A549 (cell line): ENCODE measurements at regions of chr6 and their contacts with region 1.

Region 1: DNA sequence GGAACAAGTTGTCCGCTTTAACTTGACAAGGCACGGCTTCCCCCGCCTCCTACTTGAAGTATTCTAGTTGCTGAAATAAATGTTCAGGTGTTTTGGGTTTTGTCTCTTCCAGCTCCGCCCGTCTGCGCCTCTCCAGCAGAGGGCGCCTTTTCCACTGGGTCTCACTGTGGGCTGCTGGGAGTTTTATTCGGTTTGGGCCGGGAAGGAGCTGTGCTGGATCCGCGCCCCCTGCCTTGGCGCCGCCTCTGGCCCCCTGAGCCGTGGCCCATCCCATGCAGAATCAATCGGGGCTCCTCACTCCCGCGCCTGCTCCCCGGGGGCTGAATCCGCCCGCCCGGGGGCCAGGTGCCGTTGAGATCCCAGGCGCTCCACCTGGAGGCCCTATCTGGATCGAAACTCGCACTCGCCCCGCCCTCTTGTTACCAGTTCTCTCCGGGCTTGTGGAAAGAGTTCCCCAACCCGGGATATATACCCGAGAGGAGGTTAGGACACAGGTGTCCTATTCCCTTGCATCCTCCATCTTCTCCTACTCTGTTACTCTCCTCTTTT is 51.0 kb upstream of the TCF21 start:
- DNase-seq: peak; percentile 28 to 81
- ATAC-seq: peak; percentile 96 to 97
- H3K4me3 ChIP-seq: peak overlapping the region; percentile 56
- H3K27ac ChIP-seq: peak overlapping the region; percentile 94 to 96
- H3K4me1 ChIP-seq: peaks cover 20% of the 10 kb centered on the region; the same call in 1 of the 3 replicates
- CTCF ChIP-seq: peak; percentile 89
- EP300 ChIP-seq: no peak
- POLR2A ChIP-seq: no peak
- RAD21 ChIP-seq: peak; percentile 58 to 74

Region 2: GRCh38 chr6:133889557-133890403 is 51.9 kb after region 1 on chr6:
- CTCF ChIA-PET with region 1: interaction called, 11 read pairs
- POLR2A ChIA-PET with region 1: no interaction called
- DNase-seq: no peak
- ATAC-seq: no peak
- H3K4me3 ChIP-seq: no peak overlapping the region
- H3K27ac ChIP-seq: peak overlapping the region in 1 of 2 experiments; percentile 60; a peak in 3 of 6 replicates
- H3K4me1 ChIP-seq: peaks cover 3% of the 10 kb centered on the region; the same call in 1 of the 3 replicates
- CTCF ChIP-seq: no peak
- EP300 ChIP-seq: no peak
- POLR2A ChIP-seq: no peak
- RAD21 ChIP-seq: no peak